Gastrocnemius medialis (tissue), 4 donors: ENCODE measurements at regions of chr7 and their contacts with region 1.

Region 1: DNA sequence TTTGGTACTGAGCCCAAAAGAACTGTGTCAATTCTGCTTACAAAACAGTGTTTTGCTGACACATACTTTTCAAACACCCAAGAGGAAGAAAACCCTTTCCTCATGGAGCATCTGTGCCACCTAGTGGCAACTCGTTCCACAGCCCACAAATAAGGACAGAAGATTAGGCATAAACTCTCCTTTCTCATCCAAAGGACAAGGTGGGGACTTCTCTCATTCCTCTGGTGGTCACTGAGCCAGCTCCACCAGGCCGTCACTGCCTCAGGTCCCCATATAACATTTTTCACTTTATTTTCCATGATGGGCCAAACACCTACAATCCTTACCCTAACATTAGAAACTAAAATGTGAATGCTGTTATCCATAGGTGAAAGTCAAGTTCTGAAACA is 76.9 kb downstream of the RNF216 start:
- DNase-seq: peak; percentile 55 to 79
- ATAC-seq: peak; percentile 95 to 97
- H3K4me3 ChIP-seq: peak overlapping the region in 2 of 4 donors; percentile 10 to 26
- H3K27ac ChIP-seq: peak overlapping the region; percentile 24 to 70 (median 50)
- H3K4me1 ChIP-seq: peaks cover 20 to 23% of the 10 kb centered on the region in 2 donors
- H3K27me3 ChIP-seq: no peaks in the 10 kb centered on the region
- CTCF ChIP-seq: peak; percentile 89 to 96 (median 92)
- POLR2A ChIP-seq: no peak

Region 2: DNA sequence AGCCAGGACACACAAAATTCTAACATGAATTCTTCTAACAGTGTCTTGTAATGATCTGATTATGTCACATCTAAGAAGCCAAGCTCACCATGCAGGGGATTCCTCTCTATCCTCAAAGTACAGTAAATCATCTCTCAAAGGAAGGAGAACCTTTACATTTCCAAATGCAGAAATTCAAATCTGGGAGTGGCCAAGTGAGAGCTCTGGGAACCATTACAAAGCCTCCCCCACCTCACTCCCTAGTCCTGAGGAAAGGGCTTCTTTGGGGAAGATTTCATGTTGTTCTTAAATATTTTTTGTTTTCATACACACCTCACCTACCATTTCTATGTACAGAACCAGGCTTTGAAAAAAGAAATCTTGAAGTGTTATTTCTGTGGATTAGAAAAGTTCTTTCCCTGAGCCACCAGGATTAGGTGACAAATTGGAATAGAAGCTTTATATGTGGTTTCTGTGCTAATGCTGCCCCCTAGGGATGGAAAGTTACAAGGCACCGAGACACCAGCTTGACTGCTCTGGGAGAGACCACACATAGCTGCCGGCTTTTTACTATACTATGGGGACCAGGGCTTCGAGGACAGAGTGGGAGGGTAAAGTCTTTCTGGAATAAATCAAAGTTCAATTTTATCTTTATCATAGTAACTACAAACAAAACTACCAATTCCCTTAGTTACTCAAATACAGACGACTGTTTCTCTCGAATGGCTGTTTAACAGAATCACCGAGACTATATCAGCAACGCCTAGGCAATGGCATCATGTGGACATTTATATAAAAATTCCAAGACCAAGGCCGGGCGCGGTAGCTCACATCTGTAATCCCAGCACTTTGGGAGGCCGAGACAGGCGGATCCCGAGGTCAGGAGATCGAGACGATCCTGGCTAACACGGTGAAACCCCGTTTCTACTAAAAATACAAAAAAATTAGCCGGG is 39.2 kb before region 1 on chr7:
- in situ Hi-C with region 1: no loop called
- intact Hi-C with region 1: loop called (anchors 2 kb)
- DNase-seq: peak; percentile 27 to 64
- ATAC-seq: peak; percentile 81 to 87
- H3K4me3 ChIP-seq: no peak overlapping the region
- H3K27ac ChIP-seq: no peak overlapping the region
- H3K4me1 ChIP-seq: peaks cover 0 to 27% of the 10 kb centered on the region in 2 donors
- H3K27me3 ChIP-seq: no peaks in the 10 kb centered on the region
- CTCF ChIP-seq: peak; percentile 76 to 90 (median 85)
- POLR2A ChIP-seq: no peak

Region 3: DNA sequence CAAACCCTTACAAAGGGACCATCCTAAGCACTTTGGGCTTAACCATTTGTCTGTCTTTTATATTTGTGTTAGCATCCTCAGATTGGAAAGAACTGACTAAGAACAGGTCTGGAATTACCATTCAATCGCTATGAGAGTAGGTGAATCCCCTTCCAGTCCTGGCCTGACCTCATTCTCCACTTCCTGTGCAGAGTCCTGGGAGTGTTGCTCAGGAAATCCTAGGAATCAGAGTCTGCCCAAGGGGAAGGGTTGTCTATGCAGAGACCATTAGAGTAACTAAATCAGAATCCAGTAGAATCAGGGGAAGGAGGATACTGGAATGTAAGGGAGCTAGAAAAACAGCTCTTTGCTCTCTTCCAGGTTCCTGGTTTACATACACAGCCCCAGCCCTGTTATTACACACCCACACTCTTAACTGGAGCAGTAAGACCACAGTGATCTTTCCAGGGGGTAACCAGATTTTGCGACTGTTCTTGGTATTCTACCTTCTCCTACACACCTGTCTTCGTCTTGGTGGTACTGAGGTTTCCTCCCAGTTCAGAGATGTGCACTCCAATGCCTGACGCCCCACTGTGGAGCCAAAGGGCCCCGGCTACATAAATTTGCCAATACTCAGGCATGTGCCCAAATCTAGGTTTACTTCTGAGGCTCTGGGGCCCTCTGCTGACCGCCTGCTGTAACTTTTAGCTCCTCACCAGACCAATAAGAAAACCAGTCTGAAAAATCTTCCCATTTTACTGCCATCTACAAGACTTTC is 26.8 kb before region 1 on chr7:
- in situ Hi-C with region 1: no loop called
- intact Hi-C with region 1: no loop called
- DNase-seq: peak in 1 of 2 donors; percentile 52
- ATAC-seq: peak; percentile 59 to 75
- H3K4me3 ChIP-seq: no peak overlapping the region
- H3K27ac ChIP-seq: peak overlapping the region in 1 of 4 donors; percentile 22
- H3K4me1 ChIP-seq: peaks cover 20 to 27% of the 10 kb centered on the region in 2 donors
- H3K27me3 ChIP-seq: no peaks in the 10 kb centered on the region
- CTCF ChIP-seq: peak; percentile 33 to 66 (median 60)
- POLR2A ChIP-seq: no peak